Activated naive CD4-positive, alpha-beta T cell treated with anti-CD3 and anti-CD28 coated beads for 36 hours (primary cell): ENCODE measurements at regions of chr6 and their contacts with region 1.

Region 1: DNA sequence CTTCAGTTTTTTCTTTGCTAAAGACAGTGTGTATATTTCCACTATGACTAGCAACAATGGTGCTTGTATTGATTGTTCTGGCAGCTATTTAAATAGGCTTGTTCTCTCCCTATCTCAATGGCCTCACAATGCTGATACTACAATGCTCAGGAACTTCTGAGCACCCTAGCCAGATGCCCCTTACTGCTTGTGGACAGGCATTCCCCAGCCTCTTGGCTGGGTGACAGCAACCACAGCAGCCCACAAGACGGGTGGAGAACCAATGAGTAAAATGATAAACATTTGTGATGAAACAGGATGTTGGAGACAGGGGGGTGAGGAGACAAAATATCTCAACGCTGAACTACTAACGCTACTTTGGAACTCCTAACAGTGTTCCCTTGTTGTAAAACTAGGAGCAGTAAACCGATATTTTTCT is 42.3 kb downstream of the HIVEP2 start:
- DNase-seq: peak; percentile 81
- H3K4me3 Mint-ChIP-seq: peak overlapping the region; percentile 55
- H3K27ac Mint-ChIP-seq: peak overlapping the region; percentile 91
- H3K4me1 Mint-ChIP-seq: peaks cover 61% of the 10 kb centered on the region
- H3K27me3 Mint-ChIP-seq: no peaks in the 10 kb centered on the region

Region 2: GRCh38 chr6:142850679-142851423 is 51.8 kb before region 1 on chr6:
- CTCF ChIA-PET with region 1: interaction called, 4 read pairs
- intact Hi-C with region 1: loop called (anchors 1 kb)
- DNase-seq: peak; percentile 62
- H3K4me3 Mint-ChIP-seq: peak overlapping the region; percentile 39
- H3K27ac Mint-ChIP-seq: peak overlapping the region; percentile 91
- H3K4me1 Mint-ChIP-seq: peaks cover 97% of the 10 kb centered on the region
- H3K27me3 Mint-ChIP-seq: no peaks in the 10 kb centered on the region

Region 3: DNA sequence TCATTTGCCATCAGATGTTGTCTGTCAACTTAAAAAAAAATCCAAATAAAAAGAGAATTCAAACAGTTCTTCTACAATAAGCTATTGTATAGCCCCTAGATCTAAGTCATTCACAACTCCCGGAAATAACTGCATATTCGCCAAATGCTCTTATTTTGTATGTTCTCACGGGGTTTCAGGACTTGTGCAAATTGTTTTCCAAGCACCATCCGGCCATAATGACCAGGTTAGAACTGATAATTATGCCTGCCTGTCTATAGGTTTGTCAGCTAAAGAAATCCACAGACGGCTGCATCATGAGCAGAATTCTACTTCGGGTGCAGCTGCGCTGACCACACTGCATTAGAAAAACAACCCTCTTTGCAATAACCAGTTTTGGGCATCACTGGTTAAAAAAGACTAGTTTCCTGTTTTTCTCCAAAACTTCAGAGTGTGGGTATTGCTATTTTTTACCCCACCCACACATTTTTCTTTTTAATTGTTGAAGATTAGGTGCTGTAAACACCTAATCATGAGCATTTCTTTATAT is 45.3 kb before region 1 on chr6:
- CTCF ChIA-PET with region 1: no interaction called
- intact Hi-C with region 1: loop called (anchors 1 kb)
- DNase-seq: no peak
- H3K4me3 Mint-ChIP-seq: peak overlapping the region; percentile 68
- H3K27ac Mint-ChIP-seq: peak overlapping the region; percentile 69
- H3K4me1 Mint-ChIP-seq: peaks cover 95% of the 10 kb centered on the region
- H3K27me3 Mint-ChIP-seq: no peaks in the 10 kb centered on the region

Region 4: DNA sequence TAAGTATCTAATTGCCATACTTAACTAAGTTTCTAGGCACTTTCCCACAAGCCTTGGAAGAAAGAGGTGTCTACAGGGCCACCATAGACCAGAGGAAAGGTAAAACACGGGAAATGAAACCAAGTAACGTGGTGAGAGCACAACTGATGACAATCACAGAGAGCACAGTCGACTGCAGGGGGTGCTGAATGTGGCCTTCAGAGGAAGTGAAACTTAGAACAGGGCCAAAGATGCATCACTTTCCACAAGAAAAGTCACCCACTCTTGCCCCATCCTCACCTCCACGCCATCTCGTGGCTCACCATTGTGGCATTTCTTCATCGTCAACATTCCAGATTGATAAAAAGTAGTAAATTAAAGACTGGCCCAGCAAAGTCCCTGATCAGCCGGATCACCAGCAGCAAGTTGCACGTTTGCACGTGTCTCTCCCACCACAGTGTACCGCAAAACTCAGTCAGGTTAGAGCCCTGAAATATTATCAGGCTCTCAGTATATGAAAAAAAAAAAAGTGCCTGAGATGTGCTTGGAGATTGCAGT is 10.9 kb after region 1 on chr6:
- CTCF ChIA-PET with region 1: no interaction called
- intact Hi-C with region 1: loop called (anchors 1 kb)
- DNase-seq: peak; percentile 82
- H3K4me3 Mint-ChIP-seq: peak overlapping the region; percentile 64
- H3K27ac Mint-ChIP-seq: peak overlapping the region; percentile 96
- H3K4me1 Mint-ChIP-seq: peaks cover 84% of the 10 kb centered on the region
- H3K27me3 Mint-ChIP-seq: no peaks in the 10 kb centered on the region

Region 5: GRCh38 chr6:142926494-142927270 is 24.0 kb after region 1 on chr6:
- CTCF ChIA-PET with region 1: no interaction called
- intact Hi-C with region 1: loop called (anchors 1 kb)
- DNase-seq: peak; percentile 80
- H3K4me3 Mint-ChIP-seq: peak overlapping the region; percentile 86
- H3K27ac Mint-ChIP-seq: peak overlapping the region; percentile 97
- H3K4me1 Mint-ChIP-seq: peaks cover 53% of the 10 kb centered on the region
- H3K27me3 Mint-ChIP-seq: no peaks in the 10 kb centered on the region

Region 6: GRCh38 chr6:143034689-143035334 is 132.2 kb after region 1 on chr6:
- CTCF ChIA-PET with region 1: no interaction called
- intact Hi-C with region 1: no loop called
- DNase-seq: no peak
- H3K4me3 Mint-ChIP-seq: no peak overlapping the region
- H3K27ac Mint-ChIP-seq: no peak overlapping the region
- H3K4me1 Mint-ChIP-seq: peaks cover 8% of the 10 kb centered on the region
- H3K27me3 Mint-ChIP-seq: no peaks in the 10 kb centered on the region